ENCODE measurements at regions of chr12 and their contacts with region 1.

Region 1: GRCh38 chr12:101501410-101501995 is 26.4 kb downstream of the SPIC start:
- DNase-seq: no peak
- H3K4me3 ChIP-seq: no peak overlapping the region
- H3K27me3 ChIP-seq: no peaks in the 10 kb centered on the region
- CTCF ChIP-seq: no peak

Region 2: DNA sequence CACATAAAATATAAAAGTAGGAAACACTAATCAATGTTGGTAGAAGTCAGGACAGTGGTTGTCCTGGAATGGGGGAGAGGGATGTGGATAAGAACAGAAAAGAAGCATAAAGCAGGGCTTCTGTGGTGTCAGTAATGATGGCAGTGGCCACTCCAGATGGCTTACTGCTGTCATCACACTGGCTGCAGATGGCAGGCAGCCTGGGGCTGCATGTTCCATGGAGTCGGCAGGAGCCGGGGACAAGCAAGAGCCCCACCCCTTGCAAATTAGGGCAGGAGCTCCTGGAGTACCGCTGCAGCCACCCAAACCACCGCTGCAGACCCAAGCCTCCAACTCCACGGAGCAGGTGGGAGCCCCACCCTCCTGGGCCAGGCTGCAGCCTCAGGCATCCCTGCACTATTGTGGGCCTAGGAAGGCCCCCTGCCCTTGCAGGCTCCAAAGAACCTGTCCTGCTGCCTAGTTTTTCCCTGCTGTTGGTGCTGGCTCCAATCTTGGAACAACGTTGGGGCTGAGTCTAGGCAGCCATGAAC is 262.6 kb before region 1 on chr12:
- CTCF ChIA-PET with region 1: no interaction called
- POLR2A ChIA-PET with region 1: no interaction called
- DNase-seq: no peak
- H3K4me3 ChIP-seq: no peak overlapping the region
- H3K27me3 ChIP-seq: no peaks in the 10 kb centered on the region
- CTCF ChIP-seq: no peak

Region 3: GRCh38 chr12:101485021-101485420 is 16.5 kb before region 1 on chr12:
- CTCF ChIA-PET with region 1: interaction called, 3 read pairs
- POLR2A ChIA-PET with region 1: interaction called, 15 read pairs
- DNase-seq: no peak
- H3K4me3 ChIP-seq: no peak overlapping the region
- H3K27me3 ChIP-seq: no peaks in the 10 kb centered on the region
- CTCF ChIP-seq: no peak